A673 (cell line): ENCODE measurements at regions of chr17 and their contacts with region 1.

Region 1: GRCh38 chr17:54891176-54891821 is 9.4 kb upstream of the TOM1L1 start:
- DNase-seq: peak; percentile 83
- H3K4me3 ChIP-seq: no peak overlapping the region
- H3K27ac ChIP-seq: no peak overlapping the region
- H3K4me1 ChIP-seq: peaks cover 3% of the 10 kb centered on the region
- H3K27me3 ChIP-seq: no peaks in the 10 kb centered on the region
- CTCF ChIP-seq: peak; percentile 64

Region 2: GRCh38 chr17:53032861-53033271 is 1858.4 kb before region 1 on chr17:
- CTCF ChIA-PET with region 1: no interaction called
- POLR2A ChIA-PET with region 1: no interaction called
- intact Hi-C with region 1: loop called (anchors 2 kb)
- DNase-seq: peak; percentile 86
- H3K4me3 ChIP-seq: no peak overlapping the region
- H3K27ac ChIP-seq: no peak overlapping the region
- H3K4me1 ChIP-seq: no peaks in the 10 kb centered on the region
- H3K27me3 ChIP-seq: no peaks in the 10 kb centered on the region
- CTCF ChIP-seq: peak; percentile 71

Region 3: DNA sequence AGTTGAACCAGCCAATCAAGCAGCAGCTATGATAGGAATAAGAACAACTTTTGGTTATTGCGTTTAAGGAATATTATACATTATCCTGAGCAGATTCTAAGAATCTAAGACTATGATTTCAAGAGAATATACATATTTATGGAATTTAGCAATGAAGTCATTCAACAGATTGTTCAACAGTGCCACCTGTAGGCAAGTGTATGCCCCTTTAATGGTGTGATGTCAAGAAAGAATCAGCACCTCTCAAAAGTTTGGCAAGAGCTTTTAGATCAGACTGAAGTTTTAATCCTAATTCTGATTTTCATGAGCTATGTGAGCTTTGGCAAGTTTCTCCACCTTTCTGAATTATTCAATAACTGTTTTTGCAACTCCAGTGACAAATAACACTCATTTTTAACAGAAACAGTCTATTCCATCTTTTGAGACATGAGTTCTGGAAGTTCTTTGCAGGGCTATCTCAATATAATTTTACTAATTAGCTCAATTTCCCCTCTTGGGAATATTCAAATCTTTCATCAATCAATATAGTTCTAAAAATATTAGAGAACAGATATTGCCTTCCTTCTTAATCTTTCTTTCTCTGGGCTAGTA is 464.9 kb before region 1 on chr17:
- CTCF ChIA-PET with region 1: no interaction called
- POLR2A ChIA-PET with region 1: no interaction called
- intact Hi-C with region 1: loop called (anchors 10 kb)
- DNase-seq: peak; percentile 69
- H3K4me3 ChIP-seq: no peak overlapping the region
- H3K27ac ChIP-seq: no peak overlapping the region
- H3K4me1 ChIP-seq: no peaks in the 10 kb centered on the region
- H3K27me3 ChIP-seq: no peaks in the 10 kb centered on the region
- CTCF ChIP-seq: peak; percentile 78